GM12878 (cell line): ENCODE measurements at regions of chr9 and their contacts with region 1.

Region 1: GRCh38 chr9:20333991-20334390 is 288.3 kb downstream of the MLLT3 start:
- DNase-seq: no peak
- ATAC-seq: no peak
- H3K4me3 ChIP-seq: no peak overlapping the region
- H3K27ac ChIP-seq: no peak overlapping the region
- H3K4me1 ChIP-seq: peaks cover 5% of the 10 kb centered on the region; the same call in 1 of the 2 replicates
- H3K27me3 ChIP-seq: no peaks in the 10 kb centered on the region; a peak in 1 of 4 replicates
- CTCF ChIP-seq: no peak
- EP300 ChIP-seq: no peak
- POLR2A ChIP-seq: no peak
- RAD21 ChIP-seq: no peak

Region 2: DNA sequence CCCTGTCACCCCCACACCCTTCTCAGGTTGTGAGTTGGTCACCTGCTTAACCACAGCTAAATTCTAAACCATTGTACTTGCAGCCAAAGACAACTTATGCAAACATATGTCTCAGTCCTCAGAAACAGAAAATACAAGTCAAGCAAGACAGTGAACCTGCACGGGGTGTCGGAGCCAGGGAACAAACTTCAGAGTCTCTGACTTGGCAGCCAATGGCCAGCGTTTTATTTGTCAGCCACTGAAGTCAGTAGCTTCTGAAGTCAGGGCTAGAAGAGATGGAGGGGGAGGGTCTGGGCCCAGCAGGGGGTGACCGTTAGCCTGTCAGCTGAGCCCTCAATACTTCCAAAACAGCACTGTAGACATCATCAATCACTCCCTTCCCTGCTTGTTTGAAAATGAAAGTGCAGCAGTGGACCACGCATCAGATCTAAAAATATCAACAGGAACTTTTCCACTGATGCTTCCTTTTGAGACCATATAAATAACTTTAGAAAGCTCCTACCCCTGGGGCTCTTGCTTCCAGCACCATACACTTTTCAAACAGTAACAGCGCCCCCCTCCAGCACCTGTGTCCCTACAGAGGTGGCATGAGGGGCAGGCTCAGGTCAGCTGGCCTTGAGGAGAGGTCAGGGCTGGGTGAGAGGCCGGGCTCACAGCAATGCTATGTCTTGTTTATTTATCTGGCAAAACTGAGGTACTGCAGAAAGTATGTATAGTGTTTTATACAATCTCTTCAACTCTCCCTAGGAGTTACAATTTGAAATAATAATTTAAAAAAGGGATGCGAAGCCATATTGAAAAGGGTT is 782.7 kb before region 1 on chr9:
- CTCF ChIA-PET with region 1: no interaction called
- POLR2A ChIA-PET with region 1: no interaction called
- RAD21 ChIA-PET with region 1: no interaction called
- SMC1A ChIA-PET with region 1: no interaction called
- in situ Hi-C with region 1: no loop called
- intact Hi-C with region 1: no loop called
- DNase-seq: peak; percentile 7
- ATAC-seq: peak; percentile 73
- H3K4me3 ChIP-seq: peak overlapping the region; percentile 33; the same call in 1 of the 2 replicates
- H3K27ac ChIP-seq: no peak overlapping the region
- H3K4me1 ChIP-seq: 0 out of 2 replicates have a peak, but pooled peaks cover 9% of the 10 kb centered on the region
- H3K27me3 ChIP-seq: no peaks in the 10 kb centered on the region
- CTCF ChIP-seq: no peak
- EP300 ChIP-seq: no peak
- POLR2A ChIP-seq: no peak
- RAD21 ChIP-seq: no peak

Region 3: DNA sequence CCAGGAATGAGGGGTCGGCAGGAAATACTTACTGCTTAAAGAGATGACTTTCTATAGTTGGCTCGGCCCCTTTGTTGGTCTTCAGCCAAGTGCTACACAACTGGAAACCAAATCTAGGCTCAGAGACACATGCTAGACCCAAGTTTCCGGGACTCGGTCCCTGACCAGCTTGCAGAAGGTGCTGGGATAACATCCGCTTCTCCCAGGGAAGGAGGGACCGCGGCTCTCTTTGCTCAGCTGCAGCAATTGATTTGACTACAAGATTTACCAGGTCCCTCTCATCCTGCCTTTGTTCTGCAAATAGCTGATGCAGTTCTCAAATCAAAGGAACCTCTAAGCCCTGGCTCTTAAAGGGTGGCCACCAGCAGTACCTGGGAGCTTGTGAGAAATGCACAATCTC is 26.4 kb before region 1 on chr9:
- CTCF ChIA-PET with region 1: no interaction called
- POLR2A ChIA-PET with region 1: no interaction called
- RAD21 ChIA-PET with region 1: no interaction called
- SMC1A ChIA-PET with region 1: no interaction called
- in situ Hi-C with region 1: no loop called
- intact Hi-C with region 1: no loop called
- DNase-seq: no peak
- ATAC-seq: no peak
- H3K4me3 ChIP-seq: no peak overlapping the region
- H3K27ac ChIP-seq: no peak overlapping the region
- H3K4me1 ChIP-seq: no peaks in the 10 kb centered on the region
- H3K27me3 ChIP-seq: no peaks in the 10 kb centered on the region; a peak in 1 of 4 replicates
- CTCF ChIP-seq: no peak
- EP300 ChIP-seq: no peak
- POLR2A ChIP-seq: no peak
- RAD21 ChIP-seq: no peak

Region 4: GRCh38 chr9:20319641-20320337 is 14.2 kb before region 1 on chr9:
- CTCF ChIA-PET with region 1: interaction called, 3 read pairs
- POLR2A ChIA-PET with region 1: interaction called, 3 read pairs
- RAD21 ChIA-PET with region 1: no interaction called
- SMC1A ChIA-PET with region 1: interaction called, 14 read pairs
- in situ Hi-C with region 1: no loop called
- intact Hi-C with region 1: no loop called
- DNase-seq: no peak
- ATAC-seq: peak; percentile 61
- H3K4me3 ChIP-seq: no peak overlapping the region
- H3K27ac ChIP-seq: no peak overlapping the region
- H3K4me1 ChIP-seq: no peaks in the 10 kb centered on the region
- H3K27me3 ChIP-seq: no peaks in the 10 kb centered on the region
- CTCF ChIP-seq: no peak
- EP300 ChIP-seq: 0 out of 4 replicates have a peak, but pooled peaks of 1 of the 2 experiments have one; percentile 25
- POLR2A ChIP-seq: no peak
- RAD21 ChIP-seq: no peak